Posterior vena cava (tissue), 2 donors: ENCODE measurements at regions of chr13 and their contacts with region 1.

Region 1: GRCh38 chr13:48567515-48568369 is 34.9 kb upstream of the RCBTB2 start:
- DNase-seq: no peak

Region 2: GRCh38 chr13:48532506-48533499 is 34.9 kb before region 1 on chr13 and contains the start of gene RCBTB2:
- intact Hi-C with region 1: loop called in 1 of 2 experiments (anchors 5 kb)
- DNase-seq: peak; percentile 100
- total RNA-seq, gene RCBTB2: 8.6 to 10.6 TPM